K562 (cell line): ENCODE measurements at regions of chr7 and their contacts with region 1.

Region 1: GRCh38 chr7:79157281-79157680 is 296.2 kb downstream of the MAGI2 start:
- DNase-seq: no peak
- ATAC-seq: no peak
- H3K4me3 ChIP-seq: no peak overlapping the region
- H3K27ac ChIP-seq: no peak overlapping the region
- H3K4me1 ChIP-seq: no peaks in the 10 kb centered on the region
- H3K27me3 ChIP-seq: no peaks in the 10 kb centered on the region
- CTCF ChIP-seq: no peak
- EP300 ChIP-seq: no peak
- POLR2A ChIP-seq: no peak
- RAD21 ChIP-seq: no peak

Region 2: GRCh38 chr7:79211724-79212123 is 54.4 kb after region 1 on chr7:
- CTCF ChIA-PET with region 1: no interaction called
- POLR2A ChIA-PET with region 1: no interaction called
- in situ Hi-C with region 1: no loop called
- intact Hi-C with region 1: loop called (anchors 1 kb)
- DNase-seq: no peak
- ATAC-seq: no peak
- H3K4me3 ChIP-seq: no peak overlapping the region
- H3K27ac ChIP-seq: no peak overlapping the region
- H3K4me1 ChIP-seq: no peaks in the 10 kb centered on the region
- H3K27me3 ChIP-seq: no peaks in the 10 kb centered on the region
- CTCF ChIP-seq: no peak
- EP300 ChIP-seq: no peak
- POLR2A ChIP-seq: no peak
- RAD21 ChIP-seq: no peak

Region 3: DNA sequence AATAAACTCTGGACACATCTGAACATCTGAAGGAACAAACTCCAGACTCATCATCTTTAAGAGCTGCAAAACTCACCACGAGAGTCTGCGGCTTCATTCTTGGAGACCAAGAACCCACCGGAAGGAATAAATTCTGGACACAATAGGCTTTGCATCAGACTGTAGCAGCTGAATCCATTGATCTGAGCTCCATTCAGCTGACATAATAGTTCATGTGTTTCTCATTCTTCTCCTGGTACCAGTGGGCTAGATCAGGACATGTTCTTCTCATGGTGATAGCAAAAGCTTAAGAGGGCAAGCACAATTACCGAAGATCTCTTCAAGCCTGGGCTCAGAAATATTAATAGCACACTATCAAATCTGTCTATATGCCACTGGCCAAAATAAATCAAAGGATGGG is 956.9 kb after region 1 on chr7:
- CTCF ChIA-PET with region 1: no interaction called
- POLR2A ChIA-PET with region 1: no interaction called
- in situ Hi-C with region 1: no loop called
- intact Hi-C with region 1: no loop called
- DNase-seq: no peak
- ATAC-seq: no peak
- H3K4me3 ChIP-seq: no peak overlapping the region
- H3K27ac ChIP-seq: no peak overlapping the region
- H3K4me1 ChIP-seq: no peaks in the 10 kb centered on the region
- H3K27me3 ChIP-seq: no peaks in the 10 kb centered on the region
- CTCF ChIP-seq: no peak
- EP300 ChIP-seq: no peak
- POLR2A ChIP-seq: no peak
- RAD21 ChIP-seq: no peak